ENCODE measurements at regions of chr17 and their contacts with region 1.

Region 1: GRCh38 chr17:32909787-32910369 is 18.1 kb upstream of the TMEM98 start:
- DNase-seq: peak; percentile 91
- H3K4me3 ChIP-seq: no peak overlapping the region
- H3K27ac ChIP-seq: no peak overlapping the region
- H3K4me1 ChIP-seq: peaks cover 17% of the 10 kb centered on the region
- H3K27me3 ChIP-seq: no peaks in the 10 kb centered on the region

Region 2: DNA sequence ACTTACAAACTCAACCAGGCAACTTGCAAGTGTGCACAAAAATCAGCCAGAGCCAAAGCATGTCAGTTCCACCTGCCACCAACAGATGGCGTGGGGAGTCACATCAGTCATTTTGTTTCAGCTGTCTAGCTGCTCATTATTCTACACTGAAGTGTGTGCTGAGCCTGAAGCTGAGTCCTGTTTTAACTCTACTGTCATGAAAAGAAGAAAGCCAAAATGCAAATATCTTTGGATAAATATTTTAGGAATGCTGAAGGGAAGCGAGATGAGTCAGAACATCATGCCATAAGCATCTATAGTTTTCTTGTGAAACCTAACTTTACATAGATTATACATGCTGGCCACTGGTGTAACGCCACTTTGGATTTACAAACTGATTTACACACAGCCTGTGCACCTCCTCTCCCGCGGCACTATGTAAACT is 250.4 kb before region 1 on chr17:
- in situ Hi-C with region 1: loop called (anchors 25 kb)
- DNase-seq: peak; percentile 64
- H3K4me3 ChIP-seq: no peak overlapping the region
- H3K27ac ChIP-seq: no peak overlapping the region
- H3K4me1 ChIP-seq: no peaks in the 10 kb centered on the region
- H3K27me3 ChIP-seq: no peaks in the 10 kb centered on the region

Region 3: DNA sequence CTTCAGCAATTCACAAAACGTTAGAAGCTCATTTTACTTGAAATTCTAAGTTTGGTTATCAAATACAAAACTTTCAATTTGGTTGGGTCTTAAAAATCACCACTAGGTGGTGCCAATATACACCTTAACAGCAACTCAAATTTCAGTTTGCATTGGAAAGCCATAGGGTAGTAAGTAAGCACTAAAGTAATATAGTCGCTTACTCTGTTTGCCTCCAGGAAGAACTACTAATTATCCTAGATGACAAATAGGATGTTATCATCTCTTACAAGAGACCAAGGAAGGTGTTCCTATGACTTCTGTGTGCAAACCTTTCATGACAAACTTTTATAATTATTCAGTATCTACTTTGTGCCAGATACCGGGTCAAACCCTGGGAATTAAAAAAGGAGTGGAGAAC is 126.3 kb before region 1 on chr17:
- in situ Hi-C with region 1: loop called (anchors 10 kb)
- DNase-seq: peak; percentile 80
- H3K4me3 ChIP-seq: no peak overlapping the region
- H3K27ac ChIP-seq: no peak overlapping the region
- H3K4me1 ChIP-seq: no peaks in the 10 kb centered on the region
- H3K27me3 ChIP-seq: no peaks in the 10 kb centered on the region

Region 4: GRCh38 chr17:32854207-32854606 is 55.7 kb before region 1 on chr17:
- in situ Hi-C with region 1: no loop called
- DNase-seq: peak; percentile 36
- H3K4me3 ChIP-seq: no peak overlapping the region
- H3K27ac ChIP-seq: no peak overlapping the region
- H3K4me1 ChIP-seq: peaks cover 16% of the 10 kb centered on the region; the same call in 1 of the 2 replicates
- H3K27me3 ChIP-seq: no peaks in the 10 kb centered on the region